Astrocyte of the cerebellum (primary cell): ENCODE measurements at regions of chr15 and their contacts with region 1.

Region 1: DNA sequence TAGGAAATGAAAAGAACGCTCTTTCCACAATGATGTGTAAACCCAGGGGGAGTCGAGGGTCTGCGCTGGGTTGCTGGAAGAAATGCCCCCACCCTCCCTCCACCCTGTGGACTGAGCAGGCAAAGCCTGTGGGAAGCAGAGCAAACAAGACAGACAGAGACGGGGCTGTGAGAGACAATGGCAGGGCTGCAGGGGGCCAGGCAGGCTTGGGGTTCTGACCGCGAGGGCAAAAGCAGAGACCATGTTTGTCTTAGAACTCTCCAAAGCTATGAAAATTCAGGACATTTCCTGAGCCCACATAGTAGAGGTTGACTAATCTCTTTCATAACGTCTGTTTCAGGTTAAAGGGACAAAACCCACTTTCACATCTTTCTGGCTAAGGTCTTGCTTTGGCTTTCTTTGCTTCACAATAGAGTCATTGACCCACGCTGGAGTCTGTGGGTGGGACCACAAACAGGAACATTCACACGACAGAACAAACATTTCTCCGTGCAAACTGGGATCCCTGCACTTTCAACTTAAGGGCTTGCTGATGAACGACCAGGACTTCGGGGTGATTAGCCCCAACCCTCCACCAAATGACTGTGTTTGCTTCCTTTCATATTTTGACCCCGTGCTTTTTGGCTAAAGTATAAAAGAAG is 156.0 kb upstream of the TPM1 start:
- DNase-seq: peak; percentile 70
- H3K4me3 ChIP-seq: peak overlapping the region; percentile 17
- CTCF ChIP-seq: peak; percentile 13

Region 2: GRCh38 chr15:63048115-63048775 is 161.7 kb after region 1 on chr15:
- in situ Hi-C with region 1: loop called (anchors 10 kb)
- DNase-seq: peak; percentile 78
- H3K4me3 ChIP-seq: peak overlapping the region; percentile 97
- CTCF ChIP-seq: peak; percentile 93